ENCODE measurements at regions of chr22 and their contacts with region 1.

Region 1: GRCh38 chr22:23385291-23386244 is 194.5 kb downstream of the IGLL1 start:
- DNase-seq: peak; percentile 84
- H3K4me3 ChIP-seq: no peak overlapping the region
- H3K27ac ChIP-seq: no peak overlapping the region
- H3K4me1 ChIP-seq: no peaks in the 10 kb centered on the region
- H3K27me3 ChIP-seq: no peaks in the 10 kb centered on the region
- CTCF ChIP-seq: peak; percentile 90 to 98
- POLR2A ChIP-seq: no peak

Region 2: GRCh38 chr22:22959147-22959827 is 426.3 kb before region 1 on chr22:
- CTCF ChIA-PET with region 1: interaction called, 133 read pairs
- POLR2A ChIA-PET with region 1: no interaction called
- dilution Hi-C with region 1: no loop called
- intact Hi-C with region 1: loop called (anchors 2 kb)
- DNase-seq: peak; percentile 71
- H3K4me3 ChIP-seq: no peak overlapping the region
- H3K27ac ChIP-seq: no peak overlapping the region
- H3K4me1 ChIP-seq: no peaks in the 10 kb centered on the region
- H3K27me3 ChIP-seq: peaks cover 9 to 17% of the 10 kb centered on the region in 2 experiments
- CTCF ChIP-seq: peak; percentile 70 to 81
- POLR2A ChIP-seq: no peak

Region 3: GRCh38 chr22:23156286-23156685 is 229.3 kb before region 1 on chr22:
- CTCF ChIA-PET with region 1: interaction called, 11 read pairs
- POLR2A ChIA-PET with region 1: no interaction called
- dilution Hi-C with region 1: no loop called
- intact Hi-C with region 1: no loop called
- DNase-seq: no peak
- H3K4me3 ChIP-seq: no peak overlapping the region
- H3K27ac ChIP-seq: no peak overlapping the region
- H3K4me1 ChIP-seq: no peaks in the 10 kb centered on the region
- H3K27me3 ChIP-seq: no peaks in the 10 kb centered on the region
- CTCF ChIP-seq: no peak
- POLR2A ChIP-seq: no peak

Region 4: GRCh38 chr22:23289851-23290724 is 95.5 kb before region 1 on chr22:
- CTCF ChIA-PET with region 1: interaction called, 21 read pairs
- POLR2A ChIA-PET with region 1: no interaction called
- dilution Hi-C with region 1: no loop called
- intact Hi-C with region 1: no loop called
- DNase-seq: peak; percentile 55
- H3K4me3 ChIP-seq: no peak overlapping the region
- H3K27ac ChIP-seq: peak overlapping the region; percentile 7
- H3K4me1 ChIP-seq: peaks cover 5% of the 10 kb centered on the region
- H3K27me3 ChIP-seq: no peaks in the 10 kb centered on the region
- CTCF ChIP-seq: peak; percentile 85 to 90
- POLR2A ChIP-seq: no peak

Region 5: DNA sequence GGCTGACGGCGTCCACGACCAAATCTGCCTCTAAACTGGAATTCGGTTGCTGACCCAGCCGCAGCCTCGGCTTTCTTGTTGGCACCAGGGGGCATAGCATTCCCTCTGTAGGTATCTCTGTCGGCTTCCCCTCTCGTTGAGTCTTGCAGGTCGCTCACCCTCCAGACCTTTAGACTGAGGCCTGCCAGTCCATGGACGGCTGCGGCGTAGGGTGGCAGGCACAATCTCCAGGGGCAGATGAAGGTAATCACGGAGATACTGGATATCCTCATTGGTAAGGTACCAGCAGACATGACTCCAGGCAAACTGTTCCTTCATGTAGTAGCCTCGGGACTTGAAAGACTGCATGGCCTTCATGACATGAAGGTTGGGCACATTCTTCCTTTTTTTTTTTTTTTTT is 63.0 kb before region 1 on chr22:
- CTCF ChIA-PET with region 1: interaction called, 11 read pairs
- POLR2A ChIA-PET with region 1: no interaction called
- dilution Hi-C with region 1: no loop called
- intact Hi-C with region 1: no loop called
- DNase-seq: no peak
- H3K4me3 ChIP-seq: no peak overlapping the region
- H3K27ac ChIP-seq: no peak overlapping the region
- H3K4me1 ChIP-seq: no peaks in the 10 kb centered on the region
- H3K27me3 ChIP-seq: no peaks in the 10 kb centered on the region
- CTCF ChIP-seq: no peak
- POLR2A ChIP-seq: no peak

Measured in endothelial cell of umbilical vein (primary cell).